Activated CD8-positive, alpha-beta T cell treated with anti-CD3 and anti-CD28 coated beads, Interleukin-2, amount 10 ng/mL, durations not matched to agents 7 days and 5 days (primary cell): ENCODE measurements at regions of chr1 and their contacts with region 1.

Region 1: GRCh38 chr1:204806943-204807687 is 63.5 kb upstream of the NFASC start:
- DNase-seq: peak; percentile 90
- ATAC-seq: peak; percentile 96
- H3K4me3 Mint-ChIP-seq: peak overlapping the region; percentile 78
- H3K27ac Mint-ChIP-seq: peak overlapping the region; percentile 88
- H3K4me1 Mint-ChIP-seq: peaks cover 25% of the 10 kb centered on the region
- H3K27me3 Mint-ChIP-seq: peaks cover 11% of the 10 kb centered on the region

Region 2: GRCh38 chr1:204384994-204385352 is 422.1 kb before region 1 on chr1:
- CTCF ChIA-PET with region 1: interaction called, 10 read pairs
- POLR2A ChIA-PET with region 1: no interaction called
- DNase-seq: no peak
- ATAC-seq: no peak
- H3K4me3 Mint-ChIP-seq: no peak overlapping the region
- H3K27ac Mint-ChIP-seq: no peak overlapping the region
- H3K4me1 Mint-ChIP-seq: peaks cover 5% of the 10 kb centered on the region
- H3K27me3 Mint-ChIP-seq: peaks cover 5% of the 10 kb centered on the region

Region 3: GRCh38 chr1:204516180-204516879 is 290.8 kb before region 1 on chr1 and contains the start of gene MDM4:
- CTCF ChIA-PET with region 1: interaction called, 31 read pairs
- POLR2A ChIA-PET with region 1: no interaction called
- DNase-seq: peak; percentile 97
- ATAC-seq: peak; percentile 83
- H3K4me3 Mint-ChIP-seq: no peak within 1 kb of the TSS
- H3K27ac Mint-ChIP-seq: no peak within 1 kb of the TSS
- H3K4me1 Mint-ChIP-seq: peaks cover 65% of the 10 kb centered on the region
- H3K27me3 Mint-ChIP-seq: no peaks in the 10 kb centered on the region
- total RNA-seq, gene MDM4: 72.2 to 72.4 TPM

Region 4: DNA sequence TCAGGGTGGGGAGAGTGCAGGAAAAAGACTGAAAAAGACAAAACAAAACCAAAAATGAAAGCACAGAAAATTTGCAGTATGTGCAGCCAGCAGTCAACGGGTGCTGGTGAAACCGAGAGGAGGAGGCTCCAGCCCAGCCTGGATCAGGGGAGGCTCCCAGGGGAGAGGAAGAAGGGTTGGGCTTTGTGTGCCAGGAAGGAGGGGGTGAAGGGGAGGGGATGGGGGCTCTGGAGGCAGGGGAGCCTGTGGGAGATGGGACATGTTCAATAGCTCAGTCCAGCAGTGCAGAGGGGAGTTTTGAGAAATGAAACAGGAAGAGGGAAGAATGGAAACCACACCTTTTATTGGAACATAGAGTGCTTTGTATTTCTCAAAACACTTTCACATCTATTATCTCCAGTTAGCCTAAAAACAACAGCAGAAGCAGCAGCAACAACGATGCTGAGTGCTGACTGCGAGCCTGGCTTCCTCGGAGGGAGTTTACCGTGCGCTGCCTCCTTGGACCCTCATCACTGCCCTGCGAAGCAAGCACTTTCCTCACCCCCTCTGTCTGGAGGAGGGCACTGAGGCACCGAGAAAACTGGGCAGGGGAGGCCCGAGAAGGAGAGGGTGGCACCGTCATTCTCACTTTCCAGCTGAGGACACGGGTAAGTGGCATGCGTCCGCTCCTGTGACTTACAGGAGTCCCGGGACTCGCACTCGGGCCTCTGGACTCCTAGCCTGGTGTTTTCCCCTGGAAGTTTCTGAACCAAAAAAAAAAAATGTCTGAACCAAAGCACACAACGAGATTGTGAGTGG is 228.0 kb before region 1 on chr1:
- CTCF ChIA-PET with region 1: interaction called, 39 read pairs
- POLR2A ChIA-PET with region 1: no interaction called
- DNase-seq: peak; percentile 54
- ATAC-seq: peak; percentile 80
- H3K4me3 Mint-ChIP-seq: peak overlapping the region; percentile 63
- H3K27ac Mint-ChIP-seq: peak overlapping the region; percentile 90
- H3K4me1 Mint-ChIP-seq: peaks cover 33% of the 10 kb centered on the region
- H3K27me3 Mint-ChIP-seq: no peaks in the 10 kb centered on the region

Region 5: GRCh38 chr1:204677864-204678263 is 129.3 kb before region 1 on chr1:
- CTCF ChIA-PET with region 1: interaction called, 12 read pairs
- POLR2A ChIA-PET with region 1: no interaction called
- DNase-seq: no peak
- ATAC-seq: no peak
- H3K4me3 Mint-ChIP-seq: no peak overlapping the region
- H3K27ac Mint-ChIP-seq: no peak overlapping the region
- H3K4me1 Mint-ChIP-seq: no peaks in the 10 kb centered on the region
- H3K27me3 Mint-ChIP-seq: peaks cover 18% of the 10 kb centered on the region

Region 6: GRCh38 chr1:204736836-204737387 is 70.2 kb before region 1 on chr1:
- CTCF ChIA-PET with region 1: no interaction called
- POLR2A ChIA-PET with region 1: no interaction called
- DNase-seq: no peak
- ATAC-seq: no peak
- H3K4me3 Mint-ChIP-seq: no peak overlapping the region
- H3K27ac Mint-ChIP-seq: no peak overlapping the region
- H3K4me1 Mint-ChIP-seq: no peaks in the 10 kb centered on the region
- H3K27me3 Mint-ChIP-seq: peaks cover 40% of the 10 kb centered on the region

Region 7: GRCh38 chr1:204782118-204782700 is 24.9 kb before region 1 on chr1:
- CTCF ChIA-PET with region 1: interaction called, 17 read pairs
- POLR2A ChIA-PET with region 1: no interaction called
- DNase-seq: no peak
- ATAC-seq: no peak
- H3K4me3 Mint-ChIP-seq: no peak overlapping the region
- H3K27ac Mint-ChIP-seq: no peak overlapping the region
- H3K4me1 Mint-ChIP-seq: no peaks in the 10 kb centered on the region
- H3K27me3 Mint-ChIP-seq: peaks cover 34% of the 10 kb centered on the region